Endothelial cell of umbilical vein (primary cell): ENCODE measurements at regions of chr18 and their contacts with region 1.

Region 1: GRCh38 chr18:22563098-22563707 is 145.5 kb upstream of the CTAGE1 start:
- DNase-seq: peak; percentile 95
- H3K4me3 ChIP-seq: peak overlapping the region in 2 of 3 experiments; percentile 3 to 47
- H3K27ac ChIP-seq: peak overlapping the region; percentile 59
- H3K4me1 ChIP-seq: peaks cover 41% of the 10 kb centered on the region
- H3K27me3 ChIP-seq: no peaks in the 10 kb centered on the region
- CTCF ChIP-seq: peak; percentile 60 to 68
- POLR2A ChIP-seq: no peak

Region 2: DNA sequence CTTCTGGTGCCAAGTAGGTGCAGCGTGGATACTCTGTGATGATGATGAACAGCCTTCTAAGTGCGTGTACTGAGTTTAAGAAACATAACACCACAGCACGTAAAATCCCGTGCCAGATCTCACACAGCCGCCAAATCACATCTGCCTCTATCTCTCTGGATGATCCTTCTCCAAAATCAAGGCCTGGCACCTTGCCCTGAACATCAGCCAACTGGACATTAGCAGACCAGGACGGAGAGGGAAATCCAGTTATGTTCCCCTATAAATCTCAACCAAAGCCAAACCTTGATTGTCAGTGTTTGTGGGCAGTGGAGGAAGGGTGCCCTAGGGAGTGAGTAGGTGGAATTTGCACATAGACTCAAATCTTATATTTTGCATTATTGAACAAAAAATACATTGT is 658.3 kb before region 1 on chr18:
- CTCF ChIA-PET with region 1: no interaction called
- POLR2A ChIA-PET with region 1: no interaction called
- dilution Hi-C with region 1: no loop called
- intact Hi-C with region 1: no loop called
- DNase-seq: no peak
- H3K4me3 ChIP-seq: no peak overlapping the region
- H3K27ac ChIP-seq: no peak overlapping the region
- H3K4me1 ChIP-seq: no peaks in the 10 kb centered on the region
- H3K27me3 ChIP-seq: peaks cover 0 to 6% of the 10 kb centered on the region in 2 experiments
- CTCF ChIP-seq: no peak
- POLR2A ChIP-seq: no peak

Region 3: GRCh38 chr18:21955757-21956652 is 607.2 kb before region 1 on chr18:
- CTCF ChIA-PET with region 1: interaction called, 10 read pairs
- POLR2A ChIA-PET with region 1: no interaction called
- dilution Hi-C with region 1: no loop called
- intact Hi-C with region 1: loop called (anchors 1 kb)
- DNase-seq: peak; percentile 66
- H3K4me3 ChIP-seq: no peak overlapping the region
- H3K27ac ChIP-seq: no peak overlapping the region
- H3K4me1 ChIP-seq: no peaks in the 10 kb centered on the region
- H3K27me3 ChIP-seq: peaks cover 3 to 8% of the 10 kb centered on the region in 2 experiments
- CTCF ChIP-seq: peak; percentile 86 to 94
- POLR2A ChIP-seq: no peak

Region 4: GRCh38 chr18:22174341-22175145 is 388.7 kb before region 1 on chr18:
- CTCF ChIA-PET with region 1: interaction called, 144 read pairs
- POLR2A ChIA-PET with region 1: interaction called, 6 read pairs
- dilution Hi-C with region 1: loop called (anchors 10 kb)
- intact Hi-C with region 1: loop called (anchors 1 kb)
- DNase-seq: peak; percentile 76
- H3K4me3 ChIP-seq: peak overlapping the region; percentile 74 to 83 (median 82)
- H3K27ac ChIP-seq: peak overlapping the region; percentile 87
- H3K4me1 ChIP-seq: peaks cover 51% of the 10 kb centered on the region
- H3K27me3 ChIP-seq: no peaks in the 10 kb centered on the region
- CTCF ChIP-seq: peak in 1 of 2 donors; percentile 14
- POLR2A ChIP-seq: no peak

Region 5: DNA sequence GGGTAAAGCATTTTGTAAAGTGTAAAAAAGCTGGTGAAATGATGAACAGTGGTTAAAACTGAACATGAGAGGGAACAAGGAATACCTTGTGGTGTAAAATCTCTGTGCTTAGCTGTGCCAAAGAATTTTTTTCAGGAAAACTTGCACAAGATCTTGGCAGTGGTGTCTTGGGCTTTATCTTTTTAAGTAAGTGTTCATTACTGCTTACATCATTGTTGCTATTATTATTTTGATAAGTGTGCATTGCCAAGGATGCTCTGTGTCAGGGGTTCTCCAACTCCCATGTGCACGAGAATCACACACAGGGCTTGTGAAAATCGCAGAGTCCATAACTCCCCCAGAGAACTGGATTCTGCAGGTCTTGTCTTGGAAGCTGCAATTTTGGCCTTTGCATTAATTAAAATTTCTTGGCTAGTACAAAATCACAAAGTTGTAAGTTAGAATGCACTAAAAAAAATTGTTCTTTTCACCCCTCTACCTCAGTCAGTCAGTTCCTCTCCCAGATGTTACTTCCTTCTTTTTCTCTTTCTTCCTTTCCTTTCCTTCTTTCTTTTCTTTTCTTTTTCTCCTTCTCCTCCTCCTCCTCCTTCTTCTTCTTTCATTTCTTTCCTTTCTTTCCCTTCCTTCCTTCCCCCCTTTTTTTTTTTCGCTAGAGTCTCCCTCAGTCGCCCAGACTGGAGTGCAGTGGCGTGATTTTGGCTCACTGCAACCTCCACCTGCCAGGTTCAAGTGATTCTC is 356.0 kb before region 1 on chr18:
- CTCF ChIA-PET with region 1: no interaction called
- POLR2A ChIA-PET with region 1: no interaction called
- dilution Hi-C with region 1: no loop called
- intact Hi-C with region 1: no loop called
- DNase-seq: no peak
- H3K4me3 ChIP-seq: no peak overlapping the region
- H3K27ac ChIP-seq: no peak overlapping the region
- H3K4me1 ChIP-seq: peaks cover 2% of the 10 kb centered on the region
- H3K27me3 ChIP-seq: no peaks in the 10 kb centered on the region
- CTCF ChIP-seq: no peak
- POLR2A ChIP-seq: no peak

Region 6: GRCh38 chr18:22348521-22349316 is 214.5 kb before region 1 on chr18:
- CTCF ChIA-PET with region 1: interaction called, 53 read pairs
- POLR2A ChIA-PET with region 1: no interaction called
- dilution Hi-C with region 1: no loop called
- intact Hi-C with region 1: loop called (anchors 1 kb)
- DNase-seq: peak; percentile 56
- H3K4me3 ChIP-seq: peak overlapping the region in 2 of 3 experiments; percentile 33 to 35
- H3K27ac ChIP-seq: peak overlapping the region; percentile 67
- H3K4me1 ChIP-seq: peaks cover 56% of the 10 kb centered on the region
- H3K27me3 ChIP-seq: no peaks in the 10 kb centered on the region
- CTCF ChIP-seq: no peak
- POLR2A ChIP-seq: no peak

Region 7: DNA sequence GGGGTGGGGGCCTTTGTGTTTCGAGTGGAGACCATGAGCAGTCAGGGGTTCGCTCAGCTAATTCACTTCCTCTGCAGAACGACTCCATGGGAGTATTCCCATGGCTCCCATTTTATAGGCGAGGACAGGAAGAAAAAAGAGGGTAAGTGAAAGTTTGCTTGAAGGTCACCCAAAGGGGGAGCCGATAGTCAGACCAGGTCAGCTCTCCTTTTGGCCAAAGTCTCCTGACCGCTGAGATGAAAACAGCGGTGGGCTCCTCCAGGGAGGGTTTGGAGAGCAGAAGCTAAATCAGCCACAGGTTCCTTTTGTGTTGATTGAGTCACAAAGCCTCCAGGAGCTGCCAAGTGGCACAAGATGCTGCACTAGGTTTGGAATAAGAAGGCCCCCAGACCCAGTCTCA is 111.4 kb before region 1 on chr18:
- CTCF ChIA-PET with region 1: interaction called, 7 read pairs
- POLR2A ChIA-PET with region 1: no interaction called
- dilution Hi-C with region 1: no loop called
- intact Hi-C with region 1: loop called (anchors 5 kb)
- DNase-seq: peak; percentile 29
- H3K4me3 ChIP-seq: no peak overlapping the region
- H3K27ac ChIP-seq: peak overlapping the region; percentile 74
- H3K4me1 ChIP-seq: peaks cover 9% of the 10 kb centered on the region
- H3K27me3 ChIP-seq: no peaks in the 10 kb centered on the region
- CTCF ChIP-seq: no peak
- POLR2A ChIP-seq: no peak

Region 8: DNA sequence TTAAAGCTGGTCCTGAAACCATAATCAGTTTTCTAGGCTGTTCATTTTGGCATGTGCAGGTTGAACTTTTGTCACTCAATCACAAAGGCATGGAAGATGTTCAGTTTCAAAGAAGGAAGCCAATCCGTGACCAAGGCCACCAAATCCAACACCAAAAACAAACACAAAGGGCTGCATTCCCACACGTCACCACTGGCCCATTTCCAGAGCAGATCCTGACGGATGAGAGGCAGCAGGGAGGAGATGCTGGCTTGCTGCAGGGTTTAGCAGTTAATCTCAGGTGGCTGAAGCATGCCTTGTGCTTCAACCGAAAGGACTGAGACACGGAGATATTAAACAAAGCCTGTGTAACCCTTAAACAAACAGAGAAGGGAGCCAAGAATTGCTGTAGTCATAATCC is 46.4 kb after region 1 on chr18:
- CTCF ChIA-PET with region 1: interaction called, 6 read pairs
- POLR2A ChIA-PET with region 1: no interaction called
- dilution Hi-C with region 1: no loop called
- intact Hi-C with region 1: loop called (anchors 5 kb)
- DNase-seq: peak; percentile 82
- H3K4me3 ChIP-seq: no peak overlapping the region
- H3K27ac ChIP-seq: peak overlapping the region; percentile 87
- H3K4me1 ChIP-seq: peaks cover 31% of the 10 kb centered on the region
- H3K27me3 ChIP-seq: peaks cover 0 to 10% of the 10 kb centered on the region in 2 experiments
- CTCF ChIP-seq: no peak
- POLR2A ChIP-seq: no peak

Region 9: GRCh38 chr18:22627526-22627925 is 64.3 kb after region 1 on chr18:
- CTCF ChIA-PET with region 1: no interaction called
- POLR2A ChIA-PET with region 1: no interaction called
- dilution Hi-C with region 1: no loop called
- intact Hi-C with region 1: no loop called
- DNase-seq: no peak
- H3K4me3 ChIP-seq: no peak overlapping the region
- H3K27ac ChIP-seq: no peak overlapping the region
- H3K4me1 ChIP-seq: no peaks in the 10 kb centered on the region
- H3K27me3 ChIP-seq: peaks cover 2 to 7% of the 10 kb centered on the region in 2 experiments
- CTCF ChIP-seq: no peak
- POLR2A ChIP-seq: no peak